ENCODE measurements at regions of chr12 and their contacts with region 1.

Region 1: GRCh38 chr12:90611048-90611447 is 343.9 kb downstream of the CCER1 start:
- DNase-seq: no peak
- CTCF ChIP-seq: no peak

Region 2: GRCh38 chr12:90593596-90594295 is 17.3 kb before region 1 on chr12:
- CTCF ChIA-PET with region 1: interaction called, 30 read pairs
- POLR2A ChIA-PET with region 1: no interaction called
- DNase-seq: no peak
- CTCF ChIP-seq: no peak

Region 3: DNA sequence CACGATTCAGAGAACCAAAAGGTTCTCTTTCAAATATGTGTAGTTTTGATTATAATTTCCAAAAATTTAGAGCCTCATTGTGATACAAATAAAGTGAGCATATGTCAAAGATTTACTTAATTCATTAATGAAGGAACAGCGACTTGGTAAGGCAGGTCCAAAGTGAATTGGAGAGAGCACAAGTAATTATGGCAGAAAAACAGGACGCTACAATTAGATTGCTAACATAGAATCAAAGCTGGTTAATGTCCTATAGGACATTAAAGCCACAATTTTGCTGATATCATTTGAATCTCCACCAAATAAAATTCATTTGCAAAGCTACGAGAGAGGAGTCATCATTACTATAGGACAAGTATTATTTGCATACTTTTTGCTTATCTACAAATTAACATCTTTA is 179.7 kb after region 1 on chr12:
- CTCF ChIA-PET with region 1: no interaction called
- POLR2A ChIA-PET with region 1: no interaction called
- DNase-seq: no peak
- CTCF ChIP-seq: no peak